Heart right ventricle (tissue), 16 donors: ENCODE measurements at regions of chr10 and their contacts with region 1.

Region 1: GRCh38 chr10:106175760-106176377 is 988.6 kb downstream of the SORCS1 start:
- DNase-seq: no peak
- ATAC-seq: no peak
- H3K4me3 ChIP-seq: no peak overlapping the region
- H3K27ac ChIP-seq: no peak overlapping the region
- H3K4me1 ChIP-seq: no peaks in the 10 kb centered on the region
- H3K27me3 ChIP-seq: no peaks in the 10 kb centered on the region
- CTCF ChIP-seq: peak in 8 of 9 donors; percentile 10 to 60 (median 50)

Region 2: DNA sequence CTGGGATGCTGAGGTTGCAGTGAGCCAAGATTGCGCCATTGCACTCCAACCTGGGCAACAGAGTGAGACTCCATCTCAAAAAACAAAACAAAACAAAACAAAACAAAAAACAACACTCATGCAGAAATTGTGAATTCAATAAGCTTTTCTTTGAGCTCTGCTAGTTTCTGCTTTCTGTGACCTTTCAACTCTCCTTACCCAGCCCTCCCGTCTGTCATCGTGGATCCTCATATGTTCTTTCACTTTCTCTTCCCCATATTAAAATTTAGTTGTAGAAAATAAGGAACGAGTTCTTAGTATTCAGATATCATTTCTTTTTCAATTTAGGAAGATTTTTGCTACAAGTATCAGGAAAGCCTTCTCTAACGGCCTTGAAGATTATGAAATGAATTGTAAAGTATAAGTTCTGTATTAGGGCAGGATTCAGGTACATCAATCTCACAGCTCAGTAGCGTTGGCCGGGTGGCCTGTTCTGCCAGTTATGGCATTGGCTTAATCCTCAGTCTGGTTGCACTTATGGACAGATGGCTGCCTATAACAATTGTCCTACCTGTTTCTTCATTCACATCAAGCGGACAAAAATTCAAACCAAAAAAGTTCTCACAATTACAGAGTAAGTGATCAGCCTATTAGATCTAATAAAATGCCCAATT is 367.8 kb before region 1 on chr10:
- intact Hi-C with region 1: loop called in 1 of 10 experiments (anchors 10 kb)
- DNase-seq: no peak
- ATAC-seq: no peak
- H3K4me3 ChIP-seq: no peak overlapping the region
- H3K27ac ChIP-seq: no peak overlapping the region
- H3K4me1 ChIP-seq: no peaks in the 10 kb centered on the region
- H3K27me3 ChIP-seq: no peaks in the 10 kb centered on the region
- CTCF ChIP-seq: no peak